ENCODE measurements at regions of chr1 and their contacts with region 1.

Region 1: GRCh38 chr1:159214149-159214760 is 9.6 kb downstream of the ACKR1 start:
- DNase-seq: peak in 7 of 9 experiments; percentile 6 to 60 (median 32)
- ATAC-seq: no peak
- H3K4me3 ChIP-seq: no peak overlapping the region
- H3K4me3 Mint-ChIP-seq: no peak overlapping the region
- H3K27ac ChIP-seq: no peak overlapping the region
- H3K27ac Mint-ChIP-seq: no peak overlapping the region
- H3K4me1 ChIP-seq: no peaks in the 10 kb centered on the region
- H3K4me1 Mint-ChIP-seq: no peaks in the 10 kb centered on the region
- H3K27me3 ChIP-seq: peaks cover 0 to 4% of the 10 kb centered on the region in 2 experiments
- H3K27me3 Mint-ChIP-seq: peaks cover 36% of the 10 kb centered on the region
- CTCF ChIP-seq: peak; percentile 95

Region 2: GRCh38 chr1:158611916-158612315 is 602.3 kb before region 1 on chr1:
- CTCF ChIA-PET with region 1: no interaction called
- POLR2A ChIA-PET with region 1: no interaction called
- intact Hi-C with region 1: no loop called
- DNase-seq: no peak
- ATAC-seq: no peak
- H3K4me3 ChIP-seq: no peak overlapping the region
- H3K4me3 Mint-ChIP-seq: no peak overlapping the region
- H3K27ac ChIP-seq: no peak overlapping the region
- H3K27ac Mint-ChIP-seq: no peak overlapping the region
- H3K4me1 ChIP-seq: no peaks in the 10 kb centered on the region
- H3K4me1 Mint-ChIP-seq: no peaks in the 10 kb centered on the region
- H3K27me3 ChIP-seq: no peaks in the 10 kb centered on the region
- H3K27me3 Mint-ChIP-seq: peaks cover under 1% of the 10 kb centered on the region
- CTCF ChIP-seq: no peak

Region 3: GRCh38 chr1:158901623-158902022 is 312.6 kb before region 1 on chr1:
- CTCF ChIA-PET with region 1: no interaction called
- POLR2A ChIA-PET with region 1: no interaction called
- intact Hi-C with region 1: no loop called
- DNase-seq: no peak
- ATAC-seq: no peak
- H3K4me3 ChIP-seq: no peak overlapping the region
- H3K4me3 Mint-ChIP-seq: no peak overlapping the region
- H3K27ac ChIP-seq: no peak overlapping the region
- H3K27ac Mint-ChIP-seq: no peak overlapping the region
- H3K4me1 ChIP-seq: no peaks in the 10 kb centered on the region
- H3K4me1 Mint-ChIP-seq: no peaks in the 10 kb centered on the region
- H3K27me3 ChIP-seq: no peaks in the 10 kb centered on the region
- H3K27me3 Mint-ChIP-seq: peaks cover 9% of the 10 kb centered on the region
- CTCF ChIP-seq: no peak

Region 4: GRCh38 chr1:159132271-159132881 is 81.9 kb before region 1 on chr1:
- CTCF ChIA-PET with region 1: interaction called, 22 read pairs
- POLR2A ChIA-PET with region 1: no interaction called
- intact Hi-C with region 1: loop called (anchors 1 to 2 kb)
- DNase-seq: peak; percentile 25 to 72 (median 66)
- ATAC-seq: no peak
- H3K4me3 ChIP-seq: no peak overlapping the region
- H3K4me3 Mint-ChIP-seq: no peak overlapping the region
- H3K27ac ChIP-seq: no peak overlapping the region
- H3K27ac Mint-ChIP-seq: no peak overlapping the region
- H3K4me1 ChIP-seq: no peaks in the 10 kb centered on the region
- H3K4me1 Mint-ChIP-seq: no peaks in the 10 kb centered on the region
- H3K27me3 ChIP-seq: peaks cover 0 to 3% of the 10 kb centered on the region in 2 experiments
- H3K27me3 Mint-ChIP-seq: peaks cover 5% of the 10 kb centered on the region
- CTCF ChIP-seq: peak; percentile 89

Region 5: GRCh38 chr1:159161001-159161718 is 53.1 kb before region 1 on chr1:
- CTCF ChIA-PET with region 1: interaction called, 30 read pairs
- POLR2A ChIA-PET with region 1: no interaction called
- intact Hi-C with region 1: loop called (anchors 1 kb)
- DNase-seq: peak; percentile 28 to 75 (median 63)
- ATAC-seq: peak; percentile 75
- H3K4me3 ChIP-seq: no peak overlapping the region
- H3K4me3 Mint-ChIP-seq: no peak overlapping the region
- H3K27ac ChIP-seq: no peak overlapping the region
- H3K27ac Mint-ChIP-seq: no peak overlapping the region
- H3K4me1 ChIP-seq: no peaks in the 10 kb centered on the region
- H3K4me1 Mint-ChIP-seq: peaks cover 2% of the 10 kb centered on the region
- H3K27me3 ChIP-seq: peaks cover 0 to 4% of the 10 kb centered on the region in 2 experiments
- H3K27me3 Mint-ChIP-seq: peaks cover 47% of the 10 kb centered on the region
- CTCF ChIP-seq: peak; percentile 79

Region 6: GRCh38 chr1:159197561-159198557 is 16.4 kb before region 1 on chr1:
- CTCF ChIA-PET with region 1: interaction called, 48 read pairs
- POLR2A ChIA-PET with region 1: no interaction called
- intact Hi-C with region 1: no loop called
- DNase-seq: peak in 5 of 9 experiments; percentile 4 to 52 (median 30)
- ATAC-seq: no peak
- H3K4me3 ChIP-seq: no peak overlapping the region
- H3K4me3 Mint-ChIP-seq: no peak overlapping the region
- H3K27ac ChIP-seq: no peak overlapping the region
- H3K27ac Mint-ChIP-seq: no peak overlapping the region
- H3K4me1 ChIP-seq: peaks cover 16% of the 10 kb centered on the region
- H3K4me1 Mint-ChIP-seq: peaks cover 16% of the 10 kb centered on the region
- H3K27me3 ChIP-seq: peaks cover 0 to 3% of the 10 kb centered on the region in 2 experiments
- H3K27me3 Mint-ChIP-seq: peaks cover 40% of the 10 kb centered on the region
- CTCF ChIP-seq: peak; percentile 49

Region 7: GRCh38 chr1:159229486-159229885 is 15.2 kb after region 1 on chr1:
- CTCF ChIA-PET with region 1: interaction called, 18 read pairs
- POLR2A ChIA-PET with region 1: no interaction called
- intact Hi-C with region 1: no loop called
- DNase-seq: no peak
- ATAC-seq: no peak
- H3K4me3 ChIP-seq: no peak overlapping the region
- H3K4me3 Mint-ChIP-seq: no peak overlapping the region
- H3K27ac ChIP-seq: no peak overlapping the region
- H3K27ac Mint-ChIP-seq: no peak overlapping the region
- H3K4me1 ChIP-seq: no peaks in the 10 kb centered on the region
- H3K4me1 Mint-ChIP-seq: no peaks in the 10 kb centered on the region
- H3K27me3 ChIP-seq: no peaks in the 10 kb centered on the region
- H3K27me3 Mint-ChIP-seq: peaks cover 19% of the 10 kb centered on the region
- CTCF ChIP-seq: no peak

Region 8: DNA sequence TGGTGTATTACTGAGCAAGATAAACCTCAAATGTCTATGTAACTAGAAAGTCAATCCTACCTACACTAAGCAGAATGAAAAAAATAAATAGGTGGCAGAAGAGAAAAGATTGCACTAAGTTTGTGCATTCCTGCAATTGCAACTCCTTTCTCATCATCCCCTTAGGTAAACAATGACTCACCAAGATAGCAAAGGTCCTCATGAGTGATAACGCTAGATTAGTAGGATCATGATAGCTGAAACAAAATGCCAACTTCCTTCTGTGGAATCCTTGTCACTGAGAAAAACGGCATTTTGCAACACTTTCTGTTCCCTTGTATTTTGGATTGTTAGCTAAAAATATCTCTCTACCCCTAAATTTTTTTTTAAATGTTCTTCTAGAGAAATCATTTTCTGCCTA is 67.9 kb after region 1 on chr1:
- CTCF ChIA-PET with region 1: no interaction called
- POLR2A ChIA-PET with region 1: no interaction called
- intact Hi-C with region 1: no loop called
- DNase-seq: no peak
- ATAC-seq: no peak
- H3K4me3 ChIP-seq: no peak overlapping the region
- H3K4me3 Mint-ChIP-seq: no peak overlapping the region
- H3K27ac ChIP-seq: no peak overlapping the region
- H3K27ac Mint-ChIP-seq: no peak overlapping the region
- H3K4me1 ChIP-seq: no peaks in the 10 kb centered on the region
- H3K4me1 Mint-ChIP-seq: no peaks in the 10 kb centered on the region
- H3K27me3 ChIP-seq: no peaks in the 10 kb centered on the region
- H3K27me3 Mint-ChIP-seq: peaks cover 19% of the 10 kb centered on the region
- CTCF ChIP-seq: no peak

Measured in CD8-positive, alpha-beta T cell (primary cell).